CD8-positive, alpha-beta T cell (primary cell): ENCODE measurements at regions of chr11 and their contacts with region 1.

Region 1: DNA sequence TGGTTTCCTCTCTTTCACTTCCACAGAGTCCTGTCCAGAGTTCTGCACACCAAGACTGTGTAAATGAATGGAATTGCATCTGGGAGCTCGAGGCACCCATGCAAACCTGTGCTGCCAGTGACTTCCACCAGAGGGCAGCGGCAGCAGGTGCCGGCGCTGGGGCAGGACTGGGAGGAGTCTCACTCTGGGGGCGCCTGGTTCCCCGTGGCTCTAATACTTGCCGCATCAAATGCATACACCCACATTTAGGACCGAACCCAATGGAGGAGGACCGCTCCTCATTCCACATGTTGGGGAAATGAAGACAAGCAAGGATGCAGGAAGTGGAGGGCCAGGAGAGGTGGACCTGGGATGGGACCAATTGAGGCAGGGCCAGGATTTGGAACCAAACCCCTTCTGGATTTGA is 1.1 kb upstream of the CD6 start:
- DNase-seq: peak; percentile 66 to 88 (median 83)
- ATAC-seq: peak; percentile 74
- H3K4me3 ChIP-seq: peak overlapping the region in 1 of 2 experiments; percentile 80
- H3K4me3 Mint-ChIP-seq: peak overlapping the region; percentile 96
- H3K27ac ChIP-seq: peak overlapping the region; percentile 85 to 90
- H3K27ac Mint-ChIP-seq: peak overlapping the region; percentile 97
- H3K4me1 ChIP-seq: peaks cover 16% of the 10 kb centered on the region
- H3K4me1 Mint-ChIP-seq: peaks cover 30% of the 10 kb centered on the region
- H3K27me3 ChIP-seq: no peaks in the 10 kb centered on the region
- H3K27me3 Mint-ChIP-seq: no peaks in the 10 kb centered on the region
- CTCF ChIP-seq: peak; percentile 92

Region 2: GRCh38 chr11:60717956-60718355 is 252.4 kb before region 1 on chr11:
- CTCF ChIA-PET with region 1: no interaction called
- POLR2A ChIA-PET with region 1: no interaction called
- intact Hi-C with region 1: no loop called
- DNase-seq: peak in 3 of 9 experiments; percentile 20 to 66 (median 57)
- ATAC-seq: no peak
- H3K4me3 ChIP-seq: no peak overlapping the region
- H3K4me3 Mint-ChIP-seq: no peak overlapping the region
- H3K27ac ChIP-seq: no peak overlapping the region
- H3K27ac Mint-ChIP-seq: no peak overlapping the region
- H3K4me1 ChIP-seq: no peaks in the 10 kb centered on the region
- H3K4me1 Mint-ChIP-seq: no peaks in the 10 kb centered on the region
- H3K27me3 ChIP-seq: no peaks in the 10 kb centered on the region
- H3K27me3 Mint-ChIP-seq: peaks cover 26% of the 10 kb centered on the region
- CTCF ChIP-seq: no peak

Region 3: DNA sequence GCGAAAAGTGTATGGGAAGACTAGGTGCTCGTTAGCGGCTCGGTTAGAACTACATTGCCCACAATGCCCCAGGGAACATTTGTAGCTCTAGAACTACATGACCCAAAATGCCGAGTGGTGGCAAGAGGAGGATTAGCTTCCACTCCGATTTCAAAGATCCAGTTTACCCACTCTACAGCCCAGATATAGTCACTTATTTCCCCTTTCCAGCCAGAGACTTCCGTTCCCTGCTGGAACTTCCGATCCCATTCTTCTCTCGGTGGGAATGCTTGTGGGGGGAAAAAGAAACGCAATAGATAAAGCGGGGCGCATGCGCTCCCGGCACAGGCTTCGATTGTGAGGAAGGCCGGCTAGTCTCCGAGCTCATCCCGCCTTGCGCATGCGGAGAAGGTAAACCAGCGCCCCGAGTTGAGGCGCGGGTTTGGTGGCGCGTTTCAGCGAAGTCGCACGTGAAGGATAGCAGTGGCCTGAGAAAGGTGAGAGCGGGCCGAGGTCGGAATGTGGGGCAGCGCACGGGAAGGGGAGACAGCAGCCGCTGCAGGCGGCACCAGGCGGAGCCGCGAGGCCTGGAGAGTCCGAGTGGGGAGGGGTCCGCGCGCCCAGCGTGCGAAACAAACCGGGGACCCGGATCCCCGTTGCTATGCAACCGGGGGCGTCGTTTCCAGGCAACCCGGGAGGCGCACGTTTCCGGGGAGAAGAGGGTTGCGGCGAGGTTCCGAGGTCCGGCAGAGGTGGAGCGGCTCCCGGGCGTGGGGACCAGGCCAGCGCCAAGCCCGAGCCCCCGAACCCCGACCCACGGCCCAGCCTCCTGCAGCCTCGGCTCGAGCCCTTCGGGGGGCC is 56.4 kb before region 1 on chr11 and contains the start of gene TMEM109:
- CTCF ChIA-PET with region 1: interaction called, 15 read pairs
- POLR2A ChIA-PET with region 1: interaction called, 3 read pairs
- intact Hi-C with region 1: loop called in 1 of 2 experiments (anchors 2 kb)
- DNase-seq: peak; percentile 75 to 95 (median 89)
- ATAC-seq: peak; percentile 55
- H3K4me3 ChIP-seq: peak within 1 kb of the TSS; percentile 66 to 85
- H3K4me3 Mint-ChIP-seq: peak within 1 kb of the TSS; percentile 95
- H3K27ac ChIP-seq: peak within 1 kb of the TSS; percentile 77 to 91
- H3K27ac Mint-ChIP-seq: peak within 1 kb of the TSS; percentile 97
- H3K4me1 ChIP-seq: peaks cover 40% of the 10 kb centered on the region
- H3K4me1 Mint-ChIP-seq: peaks cover 77% of the 10 kb centered on the region
- H3K27me3 ChIP-seq: no peaks in the 10 kb centered on the region
- H3K27me3 Mint-ChIP-seq: no peaks in the 10 kb centered on the region
- CTCF ChIP-seq: no peak
- total RNA-seq, gene TMEM109: 46.7 to 52.2 TPM

Region 4: DNA sequence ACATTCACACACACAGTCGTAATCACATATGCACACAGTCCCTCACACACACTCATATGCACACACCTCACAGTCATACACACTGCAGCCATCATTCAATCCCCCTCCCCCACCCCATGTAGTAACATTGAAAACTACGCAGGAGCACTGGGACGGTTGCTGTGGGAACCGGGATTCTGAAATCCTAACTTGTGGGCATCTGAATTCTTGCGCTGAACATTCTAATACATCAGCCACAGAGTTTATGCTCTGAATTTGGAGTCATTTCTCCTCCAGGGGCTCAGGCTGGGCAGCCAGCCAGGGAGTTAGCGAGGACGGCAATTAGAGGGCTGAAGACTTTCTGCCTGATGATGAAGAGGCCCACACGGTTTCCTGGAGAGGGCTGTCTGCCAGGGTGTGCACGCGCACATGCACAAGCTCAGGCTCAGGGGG is 33.8 kb after region 1 on chr11:
- CTCF ChIA-PET with region 1: interaction called, 8 read pairs
- POLR2A ChIA-PET with region 1: no interaction called
- intact Hi-C with region 1: loop called (anchors 1 kb)
- DNase-seq: peak in 6 of 9 experiments; percentile 39 to 70 (median 58)
- ATAC-seq: peak; percentile 48
- H3K4me3 ChIP-seq: peak overlapping the region in 1 of 2 experiments; percentile 12
- H3K4me3 Mint-ChIP-seq: peak overlapping the region; percentile 72
- H3K27ac ChIP-seq: peak overlapping the region; percentile 22 to 62
- H3K27ac Mint-ChIP-seq: peak overlapping the region; percentile 92
- H3K4me1 ChIP-seq: peaks cover 68% of the 10 kb centered on the region
- H3K4me1 Mint-ChIP-seq: peaks cover 78% of the 10 kb centered on the region
- H3K27me3 ChIP-seq: no peaks in the 10 kb centered on the region
- H3K27me3 Mint-ChIP-seq: no peaks in the 10 kb centered on the region
- CTCF ChIP-seq: no peak

Region 5: DNA sequence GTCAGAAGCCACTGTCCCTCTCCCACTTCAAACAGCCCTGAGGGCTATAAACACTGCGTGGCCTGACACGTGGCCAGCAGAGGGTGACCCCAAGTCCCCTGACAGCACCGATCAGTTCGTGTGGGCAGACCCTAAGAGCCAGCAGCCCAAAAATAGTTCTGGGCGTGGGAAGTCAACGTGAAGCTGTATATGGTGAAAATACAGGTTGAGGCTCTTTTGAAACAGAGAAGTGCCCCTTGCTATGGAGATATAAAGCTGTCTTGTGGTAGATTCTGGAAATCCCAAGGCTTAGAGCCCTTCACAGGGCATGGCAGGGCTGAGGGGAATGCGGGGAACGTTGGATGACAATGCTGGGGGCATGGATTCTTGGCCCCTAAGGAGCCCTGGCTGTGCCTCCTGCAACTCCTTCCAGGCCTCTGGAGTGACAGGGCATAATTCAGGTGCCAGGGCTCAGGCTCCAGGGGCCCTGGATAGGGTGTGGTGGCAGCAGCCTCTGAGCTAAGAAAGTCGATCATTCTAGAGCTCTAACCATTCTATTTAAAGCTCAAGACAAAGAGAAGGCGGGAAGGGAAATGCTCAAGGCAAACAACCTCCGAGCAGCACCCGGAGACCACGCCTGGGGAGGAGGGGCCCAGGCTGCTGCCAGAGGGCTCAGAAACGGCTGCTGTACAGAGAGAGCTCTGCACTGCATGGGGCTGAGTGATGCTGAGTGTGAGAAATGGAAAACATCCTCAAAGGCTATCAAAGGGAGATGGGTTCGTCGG is 71.6 kb after region 1 on chr11:
- CTCF ChIA-PET with region 1: interaction called, 10 read pairs
- POLR2A ChIA-PET with region 1: interaction called, 18 read pairs
- intact Hi-C with region 1: loop called in 1 of 2 experiments (anchors 1 kb)
- DNase-seq: peak; percentile 63 to 94 (median 85)
- ATAC-seq: peak; percentile 98
- H3K4me3 ChIP-seq: peak overlapping the region; percentile 10 to 17
- H3K4me3 Mint-ChIP-seq: peak overlapping the region; percentile 75
- H3K27ac ChIP-seq: peak overlapping the region; percentile 60 to 91
- H3K27ac Mint-ChIP-seq: peak overlapping the region; percentile 98
- H3K4me1 ChIP-seq: peaks cover 46% of the 10 kb centered on the region
- H3K4me1 Mint-ChIP-seq: peaks cover 48% of the 10 kb centered on the region
- H3K27me3 ChIP-seq: no peaks in the 10 kb centered on the region
- H3K27me3 Mint-ChIP-seq: no peaks in the 10 kb centered on the region
- CTCF ChIP-seq: no peak

Region 6: GRCh38 chr11:61102667-61103571 is 132.5 kb after region 1 on chr11:
- CTCF ChIA-PET with region 1: interaction called, 5 read pairs
- POLR2A ChIA-PET with region 1: interaction called, 3 read pairs
- intact Hi-C with region 1: loop called in 1 of 2 experiments (anchors 1 kb)
- DNase-seq: peak in 2 of 9 experiments; percentile 49 to 72
- ATAC-seq: peak; percentile 31
- H3K4me3 ChIP-seq: peak overlapping the region; percentile 87 to 91
- H3K4me3 Mint-ChIP-seq: no peak overlapping the region
- H3K27ac ChIP-seq: peak overlapping the region; percentile 90 to 93
- H3K27ac Mint-ChIP-seq: no peak overlapping the region
- H3K4me1 ChIP-seq: peaks cover 48% of the 10 kb centered on the region
- H3K4me1 Mint-ChIP-seq: peaks cover 40% of the 10 kb centered on the region
- H3K27me3 ChIP-seq: no peaks in the 10 kb centered on the region
- H3K27me3 Mint-ChIP-seq: no peaks in the 10 kb centered on the region
- CTCF ChIP-seq: no peak

Region 7: GRCh38 chr11:61141601-61142028 is 171.2 kb after region 1 on chr11:
- CTCF ChIA-PET with region 1: interaction called, 12 read pairs
- POLR2A ChIA-PET with region 1: no interaction called
- intact Hi-C with region 1: no loop called
- DNase-seq: no peak
- ATAC-seq: no peak
- H3K4me3 ChIP-seq: no peak overlapping the region
- H3K4me3 Mint-ChIP-seq: no peak overlapping the region
- H3K27ac ChIP-seq: no peak overlapping the region
- H3K27ac Mint-ChIP-seq: no peak overlapping the region
- H3K4me1 ChIP-seq: peaks cover under 1% of the 10 kb centered on the region
- H3K4me1 Mint-ChIP-seq: peaks cover 9% of the 10 kb centered on the region
- H3K27me3 ChIP-seq: no peaks in the 10 kb centered on the region
- H3K27me3 Mint-ChIP-seq: no peaks in the 10 kb centered on the region
- CTCF ChIP-seq: no peak

Region 8: GRCh38 chr11:61325649-61326414 is 355.5 kb after region 1 on chr11:
- CTCF ChIA-PET with region 1: no interaction called
- POLR2A ChIA-PET with region 1: no interaction called
- intact Hi-C with region 1: no loop called
- DNase-seq: no peak
- ATAC-seq: no peak
- H3K4me3 ChIP-seq: no peak overlapping the region
- H3K4me3 Mint-ChIP-seq: no peak overlapping the region
- H3K27ac ChIP-seq: no peak overlapping the region
- H3K27ac Mint-ChIP-seq: no peak overlapping the region
- H3K4me1 ChIP-seq: peaks cover 3% of the 10 kb centered on the region
- H3K4me1 Mint-ChIP-seq: peaks cover 29% of the 10 kb centered on the region
- H3K27me3 ChIP-seq: no peaks in the 10 kb centered on the region
- H3K27me3 Mint-ChIP-seq: no peaks in the 10 kb centered on the region
- CTCF ChIP-seq: no peak